Adrenal gland (tissue), 19 donors: ENCODE measurements at regions of chr1 and their contacts with region 1.

Region 1: DNA sequence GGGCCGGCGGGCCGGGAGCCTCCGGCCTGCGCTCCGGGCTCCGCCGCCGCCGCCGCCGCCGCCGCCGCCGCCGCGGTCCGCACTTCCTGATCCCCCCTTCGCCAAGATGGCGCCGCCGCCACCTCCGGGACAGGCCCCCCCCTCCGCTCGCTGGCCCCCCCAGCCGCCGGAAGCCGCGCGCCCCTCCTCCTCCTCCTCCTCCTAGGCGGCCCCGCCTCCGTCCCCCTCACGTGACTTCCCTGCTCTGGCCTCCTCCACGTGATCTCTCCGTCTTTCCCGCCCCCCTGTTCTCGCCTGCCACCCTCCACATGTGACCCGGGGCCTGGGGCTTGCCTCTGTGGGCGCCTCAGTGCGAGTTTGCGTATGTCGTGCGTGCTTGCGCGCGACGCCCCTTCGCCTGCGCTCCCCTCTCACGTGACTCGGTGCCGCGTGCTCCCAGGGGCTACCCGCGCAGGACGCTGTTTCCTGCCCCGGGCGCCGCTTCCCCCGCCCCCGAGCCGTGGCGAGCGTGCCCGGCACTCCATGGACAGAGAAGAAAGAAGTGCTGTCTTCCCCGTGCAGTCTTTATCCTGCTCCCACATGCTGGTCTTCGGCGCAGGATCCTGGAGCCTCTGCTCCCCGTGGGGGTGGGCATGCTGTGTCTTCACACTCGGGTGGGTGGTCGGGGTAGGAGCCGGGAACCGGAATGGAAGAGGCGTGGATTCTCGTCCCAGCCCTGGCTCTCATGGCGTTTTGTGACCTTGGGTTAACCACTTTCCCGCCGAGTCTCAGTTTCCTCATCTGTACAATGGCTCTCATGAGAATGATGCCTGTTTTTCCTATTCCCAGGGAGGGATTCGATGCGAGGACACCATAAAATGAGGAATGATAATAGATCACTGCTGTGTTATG is at the start of gene UBE2Q1:
- DNase-seq: peak; percentile 99 to 100 (median 100)
- H3K4me3 ChIP-seq: peak within 1 kb of the TSS in 3 of 4 donors; percentile 49 to 94 (median 75)
- H3K27ac ChIP-seq: peak within 1 kb of the TSS; percentile 40 to 98 (median 94)
- H3K4me1 ChIP-seq: peaks cover 17 to 28% of the 10 kb centered on the region in 2 donors
- H3K27me3 ChIP-seq: no peaks in the 10 kb centered on the region
- CTCF ChIP-seq: no peak
- POLR2A ChIP-seq: peak; percentile 38 to 50
- total RNA-seq, gene UBE2Q1: 15.7 to 102 (median 38.1) TPM

Region 2: GRCh38 chr1:154493276-154493675 is 65.5 kb before region 1 on chr1:
- intact Hi-C with region 1: loop called in 1 of 2 experiments (anchors 5 kb)
- DNase-seq: peak in 6 of 7 donors; percentile 29 to 68 (median 42)
- H3K4me3 ChIP-seq: no peak overlapping the region
- H3K27ac ChIP-seq: peak overlapping the region in 2 of 5 donors; percentile 13 to 44
- H3K4me1 ChIP-seq: peaks cover 13 to 37% of the 10 kb centered on the region in 2 donors
- H3K27me3 ChIP-seq: no peaks in the 10 kb centered on the region
- CTCF ChIP-seq: peak in 1 of 6 experiments; percentile 18
- POLR2A ChIP-seq: no peak

Region 3: DNA sequence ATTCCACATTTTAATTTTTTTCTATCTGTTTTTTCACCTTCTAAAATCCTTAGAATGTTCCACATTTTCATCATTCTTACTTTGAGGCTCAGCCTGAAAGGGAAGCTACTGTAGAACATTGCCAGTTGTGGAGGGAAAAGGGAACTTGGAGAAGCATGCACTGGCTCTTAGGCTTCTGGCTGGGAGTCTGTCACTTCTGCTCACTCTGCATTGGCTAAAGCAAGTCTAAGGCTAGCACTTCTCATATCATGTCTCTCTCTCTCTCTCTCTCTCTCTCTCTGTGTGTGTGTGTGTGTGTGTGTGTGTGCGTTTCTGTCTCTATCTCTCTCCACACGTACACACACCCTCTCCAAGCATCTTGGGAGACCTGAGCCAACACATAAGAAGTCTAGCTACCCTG is 98.7 kb after region 1 on chr1:
- intact Hi-C with region 1: loop called in 1 of 2 experiments (anchors 10 kb)
- DNase-seq: no peak
- H3K4me3 ChIP-seq: no peak overlapping the region
- H3K27ac ChIP-seq: no peak overlapping the region
- H3K4me1 ChIP-seq: no peaks in the 10 kb centered on the region
- H3K27me3 ChIP-seq: peaks cover 5% of the 10 kb centered on the region
- CTCF ChIP-seq: no peak
- POLR2A ChIP-seq: no peak

Region 4: DNA sequence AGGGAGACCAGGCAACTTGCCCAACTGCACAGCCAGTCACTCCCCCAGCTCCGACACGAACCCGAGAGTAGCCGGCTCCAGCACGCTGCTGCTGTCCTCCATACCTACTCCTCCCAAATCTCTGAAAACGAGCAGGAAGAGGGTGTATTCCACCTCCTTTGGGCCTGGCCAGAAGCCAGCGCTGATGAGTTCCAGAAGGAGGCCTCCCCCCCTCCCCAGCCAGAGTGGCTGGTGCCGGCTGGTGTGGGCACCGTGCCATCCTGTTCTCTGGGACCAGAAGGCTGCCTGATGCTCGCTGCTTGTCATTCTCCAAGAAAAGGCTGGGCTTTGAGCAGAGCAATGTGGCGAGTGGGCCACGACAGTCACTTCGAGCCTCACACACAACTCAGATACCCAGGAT is 289.1 kb after region 1 on chr1:
- intact Hi-C with region 1: no loop called
- DNase-seq: peak in 1 of 7 donors; percentile 67
- H3K4me3 ChIP-seq: no peak overlapping the region
- H3K27ac ChIP-seq: no peak overlapping the region
- H3K4me1 ChIP-seq: no peaks in the 10 kb centered on the region
- H3K27me3 ChIP-seq: no peaks in the 10 kb centered on the region
- CTCF ChIP-seq: no peak
- POLR2A ChIP-seq: no peak

Region 5: GRCh38 chr1:154878371-154879022 is 319.7 kb after region 1 on chr1:
- intact Hi-C with region 1: loop called in 1 of 2 experiments (anchors 5 kb)
- DNase-seq: peak; percentile 70 to 93 (median 81)
- H3K4me3 ChIP-seq: no peak overlapping the region
- H3K27ac ChIP-seq: no peak overlapping the region
- H3K4me1 ChIP-seq: no peaks in the 10 kb centered on the region
- H3K27me3 ChIP-seq: no peaks in the 10 kb centered on the region
- CTCF ChIP-seq: peak; percentile 77 to 92 (median 83)
- POLR2A ChIP-seq: no peak